Dorsolateral prefrontal cortex (tissue), 120 donors: ENCODE measurements at regions of chr7 and their contacts with region 1.

Region 1: GRCh38 chr7:103148994-103149807 is at the start of gene NAPEPLD:
- DNase-seq: peak; percentile 80 to 93 (median 90)
- H3K4me3 ChIP-seq: peak within 1 kb of the TSS; percentile 52 to 96 (median 81)
- H3K27ac ChIP-seq: peak within 1 kb of the TSS; percentile 96 to 100 (median 99)
- H3K27me3 ChIP-seq: no peaks in the 10 kb centered on the region
- CTCF ChIP-seq: peak in 32 of 56 donors; percentile 3 to 55 (median 31)
- total RNA-seq, gene NAPEPLD: 63.0 to 129 (median 90.9) TPM

Region 2: DNA sequence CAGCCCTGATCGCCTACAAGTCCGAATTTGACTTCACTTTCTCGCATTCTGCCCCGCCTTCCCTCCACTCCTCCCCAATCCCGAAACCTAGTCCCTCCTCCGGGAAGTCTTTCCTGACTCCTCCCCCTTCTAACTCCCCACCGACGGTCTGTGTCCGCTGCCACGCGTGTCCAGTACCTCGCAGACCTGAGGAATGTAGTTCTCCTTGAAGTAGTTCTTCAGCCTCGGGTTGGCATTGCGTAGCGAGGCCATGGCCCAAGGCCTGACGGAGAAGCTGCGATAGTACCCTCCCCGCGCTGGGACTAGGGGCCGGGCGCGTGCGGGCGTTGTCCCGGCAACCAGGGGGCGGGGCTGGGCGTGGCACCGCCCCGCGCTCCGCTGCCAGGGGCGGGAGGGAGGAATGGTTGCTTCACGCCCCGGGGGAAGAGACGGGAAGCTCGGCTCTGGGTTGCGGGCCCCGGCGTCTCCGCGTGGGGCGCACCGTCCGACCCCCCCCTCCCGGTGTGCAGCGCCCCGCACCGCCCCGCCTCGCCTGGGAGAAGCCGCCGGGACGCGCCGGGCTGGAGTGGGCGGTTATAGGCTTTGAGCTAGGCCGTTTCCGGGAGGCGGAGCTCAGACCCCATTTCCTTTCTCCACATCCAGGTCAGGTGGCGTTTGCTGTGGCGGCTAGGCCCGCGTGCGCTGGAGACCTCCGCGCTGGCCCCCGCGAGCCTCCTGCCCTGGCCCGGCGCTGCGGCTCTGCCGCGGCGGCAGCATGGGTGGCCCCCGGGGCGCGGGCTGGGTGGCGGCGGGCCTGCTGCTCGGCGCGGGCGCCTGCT is 74.5 kb before region 1 on chr7 and contains the starts of genes ARMC10 and FBXL13:
- intact Hi-C with region 1: loop called (anchors 5 kb)
- DNase-seq: peak; percentile 76 to 93 (median 88)
- H3K4me3 ChIP-seq: peak within 1 kb of the TSS; percentile 66 to 96 (median 84)
- H3K27ac ChIP-seq: peak within 1 kb of the TSS in 58 of 59 donors; percentile 26 to 96 (median 88)
- H3K27me3 ChIP-seq: no peaks in the 10 kb centered on the region
- CTCF ChIP-seq: peak in 43 of 56 donors; percentile 6 to 69 (median 40)
- total RNA-seq, gene ARMC10: 28.5 to 62.6 (median 44.0) TPM
- total RNA-seq, gene FBXL13: 2.0 to 10.4 (median 5.2) TPM

Region 3: DNA sequence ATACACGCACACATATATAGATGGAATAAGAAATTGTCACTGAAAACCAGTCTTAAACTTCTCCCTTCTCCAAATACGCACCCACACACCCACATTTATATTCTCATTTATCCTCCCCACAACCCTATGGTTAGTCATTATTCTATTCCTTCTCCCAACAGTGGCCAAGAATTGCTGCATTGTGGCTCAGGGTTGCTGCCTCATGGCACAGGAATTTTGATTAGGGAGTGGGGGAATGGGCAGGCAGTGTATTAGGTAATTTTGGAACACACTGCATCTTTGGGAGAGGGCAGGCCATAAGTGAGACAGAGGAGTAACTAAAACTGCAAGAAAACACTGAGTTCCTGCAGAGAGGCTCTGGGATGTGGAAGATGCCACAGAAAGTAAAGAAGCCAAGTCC is 36.0 kb before region 1 on chr7:
- intact Hi-C with region 1: loop called (anchors 2 to 5 kb)
- DNase-seq: no peak
- H3K4me3 ChIP-seq: no peak overlapping the region
- H3K27ac ChIP-seq: peak overlapping the region in 56 of 59 donors; percentile 13 to 98 (median 91)
- H3K27me3 ChIP-seq: no peaks in the 10 kb centered on the region
- CTCF ChIP-seq: no peak

Region 4: DNA sequence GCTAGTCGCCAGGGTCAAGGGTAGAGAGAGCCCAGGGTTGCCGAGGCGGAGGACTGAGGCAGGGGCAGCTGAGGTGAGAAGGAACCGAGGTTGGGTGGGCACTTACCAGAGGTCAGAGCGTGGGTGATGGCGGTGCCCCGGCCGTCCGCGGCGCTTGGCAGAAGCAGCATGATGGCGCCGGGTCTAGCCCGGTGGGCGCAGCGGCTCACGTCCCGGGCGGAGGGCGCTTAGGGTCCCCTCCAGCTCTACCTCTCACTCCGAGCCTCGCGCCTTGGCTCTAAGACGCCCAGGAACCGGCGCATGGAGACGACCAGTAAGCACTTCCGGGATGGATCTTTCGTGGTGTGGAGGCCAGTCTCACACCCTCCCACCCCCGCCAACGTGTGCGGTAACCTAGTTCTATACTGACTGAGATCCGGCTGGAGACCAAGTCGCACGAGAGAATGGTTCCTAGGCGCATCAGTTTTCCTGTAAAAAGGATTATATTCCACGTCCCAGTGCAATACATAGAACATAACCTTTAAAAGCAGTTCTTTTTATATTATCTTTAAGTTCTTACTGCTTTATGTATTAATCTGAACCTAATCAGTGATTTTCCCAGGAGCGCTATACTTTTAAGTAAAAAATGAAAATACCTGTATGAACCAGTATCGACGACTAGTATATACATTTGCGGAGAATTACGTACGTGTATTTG is 195.4 kb after region 1 on chr7 and contains the start of gene DNAJC2:
- intact Hi-C with region 1: loop called in 1 of 2 experiments (anchors 5 kb)
- DNase-seq: peak; percentile 65 to 93 (median 85)
- H3K4me3 ChIP-seq: peak within 1 kb of the TSS; percentile 69 to 99 (median 92)
- H3K27ac ChIP-seq: peak within 1 kb of the TSS in 57 of 59 donors; percentile 13 to 93 (median 76)
- H3K27me3 ChIP-seq: no peaks in the 10 kb centered on the region
- CTCF ChIP-seq: peak in 32 of 56 donors; percentile 8 to 53 (median 29)
- total RNA-seq, gene DNAJC2: 12.1 to 30.8 (median 19.6) TPM